Gastrocnemius medialis (tissue), 4 donors: ENCODE measurements at regions of chr10 and their contacts with region 1.

Region 1: DNA sequence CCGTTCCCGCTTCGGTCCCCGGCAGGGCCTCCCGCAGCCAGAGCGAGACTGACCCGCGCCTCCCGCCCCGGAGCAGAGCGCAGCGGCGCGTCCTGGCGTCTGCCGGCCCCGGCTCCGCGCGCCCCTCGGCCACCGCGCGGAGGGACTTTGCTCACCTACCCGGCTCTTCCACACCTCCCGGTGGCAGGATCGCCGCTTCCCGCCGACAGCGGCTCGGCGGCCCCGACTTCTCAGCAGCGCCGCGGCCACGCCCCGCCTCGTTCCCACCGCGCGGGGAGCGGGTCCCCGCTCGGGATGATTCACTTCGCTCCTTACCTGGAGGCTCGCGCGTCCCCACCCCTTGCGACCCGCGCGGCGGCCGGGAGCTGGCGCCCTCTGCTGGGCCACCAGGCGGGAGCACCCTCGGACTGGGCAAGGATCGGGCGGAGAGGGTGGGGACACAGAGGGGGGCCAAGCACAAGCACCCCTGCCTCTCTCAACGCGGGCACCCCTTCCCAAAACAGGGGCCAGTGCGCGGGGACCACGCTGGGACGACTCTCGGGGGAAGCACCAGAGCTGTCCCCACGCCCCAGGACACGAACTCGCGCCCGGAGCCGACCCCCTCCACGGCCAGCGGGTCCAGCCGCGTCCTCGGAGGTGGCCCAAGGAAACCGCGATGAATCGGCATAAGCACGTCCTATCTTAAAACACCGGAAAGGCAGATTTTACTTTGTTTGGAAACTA is 101.0 kb upstream of the SVIL start:
- DNase-seq: peak; percentile 84 to 89
- ATAC-seq: peak; percentile 63 to 76
- H3K4me3 ChIP-seq: peak overlapping the region; percentile 79 to 97 (median 87)
- H3K27ac ChIP-seq: peak overlapping the region; percentile 96 to 99 (median 97)
- H3K4me1 ChIP-seq: peaks cover 34 to 39% of the 10 kb centered on the region in 2 donors
- H3K27me3 ChIP-seq: no peaks in the 10 kb centered on the region
- CTCF ChIP-seq: peak; percentile 93 to 99 (median 97)
- POLR2A ChIP-seq: peak; percentile 90 to 94

Region 2: GRCh38 chr10:29517352-29517923 is 218.3 kb before region 1 on chr10:
- in situ Hi-C with region 1: no loop called
- intact Hi-C with region 1: loop called (anchors 10 kb)
- DNase-seq: no peak
- ATAC-seq: peak in 1 of 2 donors; percentile 23
- H3K4me3 ChIP-seq: no peak overlapping the region
- H3K27ac ChIP-seq: peak overlapping the region; percentile 82 to 90 (median 87)
- H3K4me1 ChIP-seq: peaks cover 66 to 81% of the 10 kb centered on the region in 2 donors
- H3K27me3 ChIP-seq: no peaks in the 10 kb centered on the region
- CTCF ChIP-seq: peak in 4 of 5 experiments; percentile 33 to 59 (median 56)
- POLR2A ChIP-seq: no peak

Region 3: GRCh38 chr10:29555746-29556481 is 179.8 kb before region 1 on chr10:
- in situ Hi-C with region 1: no loop called
- intact Hi-C with region 1: no loop called
- DNase-seq: no peak
- ATAC-seq: no peak
- H3K4me3 ChIP-seq: no peak overlapping the region
- H3K27ac ChIP-seq: peak overlapping the region; percentile 74 to 82 (median 81)
- H3K4me1 ChIP-seq: peaks cover 63 to 74% of the 10 kb centered on the region in 2 donors
- H3K27me3 ChIP-seq: no peaks in the 10 kb centered on the region
- CTCF ChIP-seq: no peak
- POLR2A ChIP-seq: peak in 1 of 2 donors; percentile 5

Region 4: DNA sequence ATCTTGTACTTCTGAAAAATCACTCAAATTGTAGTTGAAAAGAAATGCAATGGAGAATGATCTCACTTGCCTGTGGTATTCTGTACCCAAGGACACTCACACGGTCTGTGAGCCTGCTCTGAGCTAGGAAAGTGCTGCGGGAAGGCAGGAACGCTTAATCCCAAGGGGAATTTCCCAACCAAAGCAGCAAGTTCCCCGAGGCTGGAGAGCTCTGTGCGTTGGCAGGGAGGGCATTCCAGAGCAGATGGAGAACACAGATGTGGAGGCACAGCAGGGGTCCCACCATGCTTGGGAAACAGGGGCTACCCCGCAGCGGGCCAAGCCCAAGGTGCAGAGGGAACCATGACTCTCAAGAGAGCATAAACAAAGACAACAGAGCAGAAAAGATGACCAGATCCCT is 114.6 kb before region 1 on chr10:
- in situ Hi-C with region 1: no loop called
- intact Hi-C with region 1: loop called (anchors 5 kb)
- DNase-seq: peak; percentile 80 to 84
- ATAC-seq: peak; percentile 68 to 76
- H3K4me3 ChIP-seq: peak overlapping the region; percentile 31 to 47 (median 42)
- H3K27ac ChIP-seq: peak overlapping the region; percentile 95 to 96 (median 96)
- H3K4me1 ChIP-seq: peaks cover 72 to 79% of the 10 kb centered on the region in 2 donors
- H3K27me3 ChIP-seq: no peaks in the 10 kb centered on the region
- CTCF ChIP-seq: no peak
- POLR2A ChIP-seq: peak; percentile 67 to 75

Region 5: DNA sequence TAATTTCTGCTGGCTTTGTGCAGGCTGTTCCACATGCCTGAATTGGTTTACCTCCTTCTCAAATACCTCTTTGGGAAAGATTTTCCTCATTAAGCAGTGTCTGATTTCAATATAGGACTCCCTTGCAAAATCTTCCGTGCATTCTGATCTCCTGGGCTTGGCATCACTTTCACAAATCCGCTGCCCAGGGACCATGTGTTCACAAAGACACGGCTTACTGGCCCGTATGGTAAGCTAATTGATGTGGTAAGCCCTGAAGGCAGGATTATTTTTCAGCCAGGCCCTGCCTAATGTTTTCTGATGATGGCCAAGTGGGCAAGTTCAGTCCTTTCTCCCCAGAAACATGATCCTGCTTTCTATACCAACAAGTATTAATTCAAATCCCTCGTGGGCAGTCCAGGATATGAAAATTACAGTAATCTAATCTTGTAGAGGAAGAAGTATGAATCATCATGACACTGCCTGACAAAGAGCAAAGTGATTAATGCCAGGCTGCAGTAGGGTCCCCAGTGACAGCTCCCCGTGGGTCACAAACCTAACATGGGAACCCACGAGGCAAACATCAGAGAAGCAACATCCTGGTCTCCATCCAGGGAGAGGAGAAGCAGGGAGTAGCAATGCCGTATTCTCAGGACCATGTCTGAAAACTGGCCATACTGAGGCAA is 89.4 kb before region 1 on chr10:
- in situ Hi-C with region 1: no loop called
- intact Hi-C with region 1: loop called (anchors 2 kb)
- DNase-seq: peak; percentile 83 to 88
- ATAC-seq: peak; percentile 45 to 52
- H3K4me3 ChIP-seq: peak overlapping the region in 3 of 4 donors; percentile 21 to 40 (median 22)
- H3K27ac ChIP-seq: peak overlapping the region; percentile 95 to 96 (median 96)
- H3K4me1 ChIP-seq: peaks cover 61 to 69% of the 10 kb centered on the region in 2 donors
- H3K27me3 ChIP-seq: no peaks in the 10 kb centered on the region
- CTCF ChIP-seq: no peak
- POLR2A ChIP-seq: peak in 1 of 2 donors; percentile 47

Region 6: DNA sequence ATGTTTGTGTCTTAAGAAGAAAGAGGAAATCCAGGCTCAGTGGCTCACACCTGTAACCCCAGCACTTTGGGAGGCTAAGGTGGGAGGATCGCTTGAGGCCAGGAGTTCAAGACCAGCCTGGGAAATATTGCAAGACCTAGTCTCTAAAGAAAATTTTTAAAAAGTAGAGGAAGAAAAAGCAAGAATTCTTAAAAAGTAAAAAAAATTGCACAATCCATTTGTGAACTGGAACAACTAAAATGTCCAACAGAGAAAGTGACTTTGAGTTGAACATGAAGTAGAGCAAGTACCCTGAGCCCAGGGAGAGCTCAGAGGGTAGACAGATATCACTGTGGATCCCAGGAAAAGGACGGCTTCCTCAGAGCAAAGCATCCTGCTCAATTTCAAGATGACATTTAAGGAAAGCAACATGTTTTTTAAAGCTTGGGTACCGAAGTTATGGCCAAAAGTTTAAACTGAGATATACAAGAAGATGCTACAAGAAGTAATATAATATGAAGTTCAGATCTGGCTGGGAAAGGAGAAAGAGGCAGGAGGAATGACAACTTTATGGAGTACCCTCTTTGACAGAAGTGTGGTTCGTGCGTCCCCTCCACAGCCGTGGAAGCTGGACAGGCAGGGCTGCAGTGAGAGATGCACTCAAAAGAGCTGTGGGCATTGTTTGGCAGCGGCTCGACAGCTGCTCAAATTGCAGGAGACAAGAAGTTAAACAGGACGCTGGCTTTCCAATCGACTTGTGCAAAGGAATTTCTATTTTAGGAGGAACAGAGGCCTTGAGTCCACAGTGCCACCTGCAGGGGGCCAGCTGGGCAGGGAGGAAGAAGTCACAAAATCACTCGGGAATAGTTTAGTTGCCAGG is 122.3 kb after region 1 on chr10:
- in situ Hi-C with region 1: loop called in 3 of 4 experiments (anchors 5 to 10 kb)
- intact Hi-C with region 1: loop called (anchors 1 kb)
- DNase-seq: peak; percentile 77 to 89
- ATAC-seq: peak; percentile 70 to 84
- H3K4me3 ChIP-seq: peak overlapping the region in 2 of 4 donors; percentile 5 to 37
- H3K27ac ChIP-seq: peak overlapping the region; percentile 78 to 85 (median 84)
- H3K4me1 ChIP-seq: peaks cover 47 to 49% of the 10 kb centered on the region in 2 donors
- H3K27me3 ChIP-seq: no peaks in the 10 kb centered on the region
- CTCF ChIP-seq: peak; percentile 75 to 85 (median 77)
- POLR2A ChIP-seq: peak in 1 of 2 donors; percentile 41

Region 7: DNA sequence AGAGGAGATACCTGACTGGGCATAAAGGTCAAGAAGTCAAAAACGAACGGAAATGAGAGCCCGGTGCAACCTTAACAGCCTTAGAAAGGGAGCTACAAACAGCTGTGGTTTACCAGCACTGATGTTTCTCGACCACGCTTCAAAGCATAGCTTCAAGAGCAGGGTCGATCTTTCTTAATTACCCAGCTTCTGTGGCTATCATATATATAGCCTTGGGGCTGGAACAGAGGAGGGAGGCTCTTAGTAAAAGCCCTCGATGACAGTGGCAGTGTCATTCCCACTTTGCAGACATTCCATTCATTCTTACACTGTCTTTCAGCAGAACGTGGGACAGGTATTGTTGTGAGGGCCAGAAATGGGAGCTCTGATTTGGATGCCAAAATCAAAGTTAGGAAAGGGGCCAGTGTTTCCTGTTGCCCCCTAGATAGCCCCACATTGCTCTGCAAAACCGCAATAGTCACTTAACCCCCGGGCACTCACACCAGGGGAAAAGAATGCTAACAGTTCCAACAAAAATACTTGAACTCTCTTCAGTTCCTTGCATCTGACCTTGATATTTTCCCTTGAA is 471.8 kb after region 1 on chr10:
- in situ Hi-C with region 1: no loop called
- intact Hi-C with region 1: no loop called
- DNase-seq: no peak
- ATAC-seq: no peak
- H3K4me3 ChIP-seq: no peak overlapping the region
- H3K27ac ChIP-seq: no peak overlapping the region
- H3K4me1 ChIP-seq: no peaks in the 10 kb centered on the region
- H3K27me3 ChIP-seq: no peaks in the 10 kb centered on the region
- CTCF ChIP-seq: no peak
- POLR2A ChIP-seq: no peak